Right lobe of liver (tissue), 6 donors: ENCODE measurements at regions of chr11 and their contacts with region 1.

Region 1: GRCh38 chr11:33329705-33330329 is 72.6 kb downstream of the HIPK3 start:
- DNase-seq: peak in 1 of 3 donors; percentile 52
- ATAC-seq: peak; percentile 91 to 95 (median 93)
- H3K4me3 ChIP-seq: no peak overlapping the region
- H3K27ac ChIP-seq: no peak overlapping the region
- H3K4me1 ChIP-seq: peaks cover 0 to 5% (median 0%) of the 10 kb centered on the region in 4 donors
- H3K27me3 ChIP-seq: no peaks in the 10 kb centered on the region
- CTCF ChIP-seq: peak; percentile 65 to 77 (median 69)
- POLR2A ChIP-seq: no peak

Region 2: DNA sequence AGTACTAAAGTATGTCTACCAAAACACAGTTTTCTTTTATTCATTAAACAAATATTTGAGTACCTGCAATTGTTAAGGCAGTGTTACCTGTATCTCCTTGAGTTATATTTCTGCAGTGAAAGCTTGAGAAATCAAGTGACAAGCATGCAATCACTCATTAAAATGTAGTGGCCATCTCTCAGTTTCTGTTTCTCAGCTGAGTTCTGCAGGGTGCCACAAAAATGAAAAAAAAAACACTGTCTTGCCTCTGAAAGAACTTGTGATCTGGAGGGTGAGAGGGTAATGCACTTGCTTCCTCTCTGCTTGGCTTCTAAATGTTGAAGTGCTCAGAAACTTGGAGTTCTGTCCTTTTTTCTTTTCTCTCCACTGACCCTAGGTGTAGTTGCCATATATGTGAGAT is 430.4 kb before region 1 on chr11:
- intact Hi-C with region 1: no loop called
- DNase-seq: no peak
- ATAC-seq: peak in 2 of 4 donors; percentile 29 to 58
- H3K4me3 ChIP-seq: no peak overlapping the region
- H3K27ac ChIP-seq: no peak overlapping the region
- H3K4me1 ChIP-seq: peaks cover 0 to 5% (median 0%) of the 10 kb centered on the region in 4 donors
- H3K27me3 ChIP-seq: no peaks in the 10 kb centered on the region
- CTCF ChIP-seq: no peak
- POLR2A ChIP-seq: no peak

Region 3: GRCh38 chr11:33172996-33173395 is 156.8 kb before region 1 on chr11:
- intact Hi-C with region 1: loop called in 1 of 2 experiments (anchors 10 kb)
- DNase-seq: no peak
- ATAC-seq: peak; percentile 43 to 67 (median 60)
- H3K4me3 ChIP-seq: no peak overlapping the region
- H3K27ac ChIP-seq: no peak overlapping the region
- H3K4me1 ChIP-seq: no peaks in the 10 kb centered on the region
- H3K27me3 ChIP-seq: no peaks in the 10 kb centered on the region
- CTCF ChIP-seq: no peak
- POLR2A ChIP-seq: no peak

Region 4: DNA sequence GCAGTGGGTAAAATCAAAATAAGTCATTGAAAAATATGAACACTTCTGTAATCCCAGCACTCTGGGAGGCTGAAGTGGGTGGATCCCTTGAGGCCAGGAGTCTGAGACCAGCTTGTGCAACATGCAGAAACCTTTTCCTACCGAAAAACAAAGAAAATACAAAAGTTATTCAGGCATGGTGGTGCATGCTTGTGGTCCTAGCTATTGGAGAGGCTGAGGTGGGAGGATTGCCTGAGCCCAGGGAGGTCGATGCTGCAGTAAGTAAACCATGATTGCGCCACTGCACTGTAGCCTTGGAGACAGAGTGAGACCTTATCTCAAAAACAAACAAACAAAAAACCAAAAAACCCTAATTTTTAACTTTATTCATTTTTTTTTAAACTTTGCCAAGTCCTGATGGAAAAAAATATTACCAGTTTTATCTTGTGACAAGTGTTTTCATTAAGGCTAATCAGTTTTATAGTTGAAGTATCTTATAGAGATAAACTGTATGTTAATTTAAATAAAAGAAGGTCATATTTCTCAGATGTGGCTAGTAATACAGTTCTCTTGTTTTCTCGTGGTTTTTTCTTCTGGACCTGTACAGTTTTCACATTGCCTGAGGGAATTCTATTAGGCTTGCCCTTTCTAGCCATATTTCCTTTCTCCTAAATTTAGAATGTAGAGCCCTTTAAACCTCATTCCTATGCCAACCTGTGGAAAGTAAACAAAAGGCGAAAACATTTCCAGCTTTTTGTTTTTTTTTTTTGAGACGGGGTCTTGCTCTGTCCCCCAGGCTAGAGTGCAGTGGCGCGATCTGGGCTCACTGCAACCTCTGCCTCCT is 63.2 kb before region 1 on chr11:
- intact Hi-C with region 1: no loop called
- DNase-seq: no peak
- ATAC-seq: peak; percentile 68 to 95 (median 80)
- H3K4me3 ChIP-seq: no peak overlapping the region
- H3K27ac ChIP-seq: peak overlapping the region in 1 of 3 donors; percentile 21
- H3K4me1 ChIP-seq: peaks cover 0 to 40% (median 14%) of the 10 kb centered on the region in 4 donors
- H3K27me3 ChIP-seq: no peaks in the 10 kb centered on the region
- CTCF ChIP-seq: no peak
- POLR2A ChIP-seq: no peak

Region 5: DNA sequence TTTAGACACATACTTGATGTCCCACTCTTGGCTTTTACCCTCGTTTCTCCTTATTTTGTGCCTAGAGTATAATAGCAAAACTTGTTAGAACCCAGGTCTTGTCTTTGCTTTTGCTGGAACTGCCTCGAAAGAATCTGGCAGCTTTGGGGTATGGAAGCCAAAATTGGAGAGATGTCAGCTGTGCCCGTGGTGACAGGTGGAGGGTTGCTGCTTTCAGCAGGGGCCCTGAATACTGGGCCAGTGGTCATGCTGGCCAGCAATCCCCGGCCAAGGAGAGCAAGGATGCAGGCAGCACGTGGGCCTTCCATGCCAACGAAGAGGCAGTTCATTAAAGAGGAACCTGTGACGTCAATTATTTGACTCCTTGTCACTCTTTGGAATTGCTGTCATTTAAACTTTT is 108.5 kb after region 1 on chr11:
- intact Hi-C with region 1: no loop called
- DNase-seq: no peak
- ATAC-seq: no peak
- H3K4me3 ChIP-seq: no peak overlapping the region
- H3K27ac ChIP-seq: no peak overlapping the region
- H3K4me1 ChIP-seq: no peaks in the 10 kb centered on the region
- H3K27me3 ChIP-seq: no peaks in the 10 kb centered on the region
- CTCF ChIP-seq: no peak
- POLR2A ChIP-seq: no peak